ENCODE measurements at regions of chr14 and their contacts with region 1.

Region 1: DNA sequence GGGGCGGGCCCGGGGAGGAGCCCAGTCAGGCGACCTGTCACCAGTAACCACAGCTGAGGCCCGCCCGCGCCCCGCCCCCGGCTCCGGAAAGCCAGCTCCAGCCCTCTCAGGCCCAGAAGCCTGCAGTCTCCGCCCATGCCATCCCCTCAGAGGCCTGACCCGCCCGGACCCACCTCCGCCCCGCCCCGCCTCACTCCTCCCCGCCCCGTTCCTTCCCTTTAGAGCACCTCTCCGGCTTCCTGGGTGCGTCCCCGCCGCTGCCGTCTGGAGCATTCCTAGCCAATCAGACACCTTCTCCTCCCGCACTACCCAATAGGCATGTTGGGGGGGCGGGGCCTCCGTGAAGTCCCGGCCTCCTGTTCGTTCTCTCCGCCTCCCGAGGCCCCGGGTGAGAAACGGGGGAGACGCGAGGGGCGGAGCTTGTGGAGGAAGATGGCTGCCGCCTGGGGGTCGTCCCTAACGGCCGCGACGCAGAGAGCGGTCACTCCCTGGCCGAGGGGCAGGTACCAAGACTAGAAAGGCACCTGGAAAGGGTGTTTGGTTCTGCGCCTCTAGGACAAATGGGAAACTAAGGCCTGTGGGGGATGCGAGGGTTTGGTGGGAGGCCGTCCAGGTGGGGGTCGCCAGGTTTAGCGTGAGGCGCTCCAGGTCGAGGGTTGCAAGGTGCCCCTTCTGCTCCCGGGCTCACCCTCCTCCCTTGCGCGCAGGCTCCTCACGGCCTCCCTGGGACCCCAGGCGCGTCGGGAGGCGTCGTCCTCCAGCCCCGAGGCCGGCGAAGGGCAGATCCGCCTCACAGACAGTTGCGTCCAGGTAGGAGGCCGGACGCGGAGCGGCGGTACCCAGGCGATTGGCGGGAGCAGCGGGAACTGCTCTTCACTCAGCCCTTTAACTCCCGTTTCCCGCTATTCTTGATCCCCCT is at the start of gene ISCA2:
- DNase-seq: peak; percentile 98
- ATAC-seq: peak; percentile 90
- H3K4me3 Mint-ChIP-seq: no peak within 1 kb of the TSS
- H3K27ac Mint-ChIP-seq: no peak within 1 kb of the TSS
- H3K4me1 Mint-ChIP-seq: peaks cover 34% of the 10 kb centered on the region
- H3K27me3 Mint-ChIP-seq: no peaks in the 10 kb centered on the region
- CTCF ChIP-seq: no peak
- total RNA-seq, gene ISCA2: 35.0 and 35.3 TPM in 2 replicates

Region 2: DNA sequence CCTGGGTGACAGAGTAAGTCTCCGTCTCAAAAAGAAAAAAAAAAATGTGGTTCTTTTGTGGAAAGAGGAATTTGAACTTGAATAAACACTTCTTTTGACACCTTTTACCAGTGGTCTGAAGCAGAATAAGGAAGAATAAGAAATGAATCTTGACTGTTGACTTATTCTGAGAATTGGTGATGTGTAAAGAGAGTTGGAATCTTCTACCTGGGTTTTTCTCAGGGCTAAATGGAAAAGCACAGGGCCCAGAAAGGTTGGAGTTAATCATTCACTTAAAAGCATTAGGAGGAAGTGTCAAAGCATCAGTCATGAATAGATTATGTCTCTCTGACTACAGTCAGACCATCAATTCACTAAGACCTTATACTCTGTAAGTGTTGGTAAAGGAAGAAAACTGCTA is 793.3 kb before region 1 on chr14:
- CTCF ChIA-PET with region 1: no interaction called
- POLR2A ChIA-PET with region 1: no interaction called
- intact Hi-C with region 1: no loop called
- DNase-seq: no peak
- ATAC-seq: no peak
- H3K4me3 Mint-ChIP-seq: no peak overlapping the region
- H3K27ac Mint-ChIP-seq: no peak overlapping the region
- H3K4me1 Mint-ChIP-seq: peaks cover 11% of the 10 kb centered on the region
- H3K27me3 Mint-ChIP-seq: no peaks in the 10 kb centered on the region
- CTCF ChIP-seq: no peak

Region 3: GRCh38 chr14:74302634-74303577 is 190.7 kb before region 1 on chr14 and contains the start of gene ABCD4:
- CTCF ChIA-PET with region 1: interaction called, 4 read pairs
- POLR2A ChIA-PET with region 1: interaction called, 5 read pairs
- intact Hi-C with region 1: loop called (anchors 1 kb)
- DNase-seq: peak; percentile 84
- ATAC-seq: peak; percentile 97
- H3K4me3 Mint-ChIP-seq: peak within 1 kb of the TSS; percentile 96
- H3K27ac Mint-ChIP-seq: peak within 1 kb of the TSS; percentile 94
- H3K4me1 Mint-ChIP-seq: peaks cover 26% of the 10 kb centered on the region
- H3K27me3 Mint-ChIP-seq: no peaks in the 10 kb centered on the region
- CTCF ChIP-seq: no peak
- total RNA-seq, gene ABCD4: 58.2 and 78.4 TPM in 2 replicates

Region 4: DNA sequence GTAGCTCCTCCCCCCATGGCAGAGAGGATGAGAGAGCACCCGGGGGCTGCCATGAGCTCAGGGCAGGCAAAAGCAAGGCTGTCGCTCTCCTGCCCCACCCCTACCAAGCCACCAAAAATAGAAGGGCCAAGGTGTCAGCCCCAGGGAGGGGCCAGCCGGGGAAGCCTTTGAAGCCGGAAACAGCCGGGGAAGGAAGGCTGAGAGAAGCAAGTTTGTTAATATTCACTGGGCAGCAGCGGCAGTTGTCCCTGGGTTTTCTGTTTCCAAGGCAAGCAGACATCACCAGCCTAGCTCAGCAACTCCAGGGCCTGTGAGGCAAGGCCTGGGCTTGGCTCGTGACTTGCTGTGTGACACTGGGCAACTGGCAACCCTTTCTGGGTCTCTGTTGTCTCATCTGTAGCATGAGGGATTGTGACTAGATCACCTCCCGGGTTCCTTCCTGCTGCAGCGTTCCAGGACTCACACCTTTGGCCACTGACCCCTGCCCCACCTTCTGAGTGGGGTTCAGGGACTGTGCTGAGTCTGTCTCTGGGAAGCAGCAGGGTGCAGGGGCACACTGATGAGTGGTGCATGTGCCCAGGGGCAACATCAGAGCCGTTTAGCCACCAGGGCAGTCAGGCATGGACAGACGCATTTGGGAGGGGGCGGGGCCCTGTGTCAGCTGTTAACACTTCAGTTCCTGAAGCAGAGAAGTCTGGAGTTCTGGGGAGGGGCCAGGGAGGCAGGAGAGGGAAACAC is 91.9 kb before region 1 on chr14:
- CTCF ChIA-PET with region 1: no interaction called
- POLR2A ChIA-PET with region 1: interaction called, 18 read pairs
- intact Hi-C with region 1: loop called (anchors 1 kb)
- DNase-seq: peak; percentile 74
- ATAC-seq: peak; percentile 90
- H3K4me3 Mint-ChIP-seq: peak overlapping the region; percentile 87
- H3K27ac Mint-ChIP-seq: peak overlapping the region; percentile 98
- H3K4me1 Mint-ChIP-seq: peaks cover 54% of the 10 kb centered on the region
- H3K27me3 Mint-ChIP-seq: no peaks in the 10 kb centered on the region
- CTCF ChIP-seq: no peak

Region 5: DNA sequence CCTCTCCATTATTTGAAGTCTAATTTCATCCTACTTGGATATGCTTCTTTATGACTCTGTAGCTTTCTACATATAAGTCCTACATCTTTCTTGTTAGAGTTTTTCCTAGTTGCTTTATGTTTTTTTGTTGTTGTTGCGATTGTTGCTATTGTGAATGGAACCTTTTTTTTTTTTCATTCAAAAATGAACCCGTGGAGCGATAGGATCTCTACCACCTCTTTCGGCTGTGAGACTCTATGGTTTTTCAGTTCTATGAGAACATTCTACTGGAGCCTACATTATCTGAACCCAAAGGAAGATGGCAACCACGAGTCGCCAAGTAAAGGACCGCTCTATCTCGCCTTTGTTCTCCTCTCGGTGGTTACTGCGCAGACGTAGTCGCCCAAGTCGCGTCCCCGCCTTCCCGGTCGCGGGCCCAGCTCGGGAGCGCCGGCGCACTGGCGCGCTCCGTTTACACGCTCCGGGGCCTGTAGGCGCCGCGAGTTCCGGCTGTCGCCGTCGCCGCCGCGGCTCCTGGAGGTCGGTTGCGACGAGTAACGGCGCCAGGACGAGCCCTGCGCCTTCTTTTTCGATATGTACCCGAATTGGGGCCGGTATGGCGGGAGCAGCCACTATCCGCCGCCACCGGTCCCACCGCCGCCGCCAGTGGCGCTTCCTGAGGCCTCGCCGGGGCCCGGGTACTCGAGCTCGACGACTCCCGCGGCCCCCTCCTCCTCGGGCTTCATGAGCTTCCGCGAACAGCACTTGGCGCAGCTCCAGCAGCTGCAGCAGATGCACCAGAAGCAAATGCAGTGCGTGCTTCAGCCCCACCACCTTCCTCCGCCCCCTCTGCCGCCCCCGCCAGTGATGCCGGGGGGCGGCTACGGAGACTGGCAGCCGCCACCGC is 269.6 kb after region 1 on chr14 and contains the start of gene YLPM1:
- CTCF ChIA-PET with region 1: no interaction called
- POLR2A ChIA-PET with region 1: no interaction called
- intact Hi-C with region 1: loop called (anchors 2 kb)
- DNase-seq: peak; percentile 86
- ATAC-seq: peak; percentile 95
- H3K4me3 Mint-ChIP-seq: peak within 1 kb of the TSS; percentile 90
- H3K27ac Mint-ChIP-seq: peak within 1 kb of the TSS; percentile 90
- H3K4me1 Mint-ChIP-seq: peaks cover 55% of the 10 kb centered on the region
- H3K27me3 Mint-ChIP-seq: no peaks in the 10 kb centered on the region
- CTCF ChIP-seq: no peak
- total RNA-seq, gene YLPM1: 68.5 and 85.9 TPM in 2 replicates

Region 6: GRCh38 chr14:74945823-74946682 is 452.5 kb after region 1 on chr14:
- CTCF ChIA-PET with region 1: no interaction called
- POLR2A ChIA-PET with region 1: no interaction called
- intact Hi-C with region 1: loop called (anchors 10 kb)
- DNase-seq: peak; percentile 61
- ATAC-seq: peak; percentile 67
- H3K4me3 Mint-ChIP-seq: no peak overlapping the region
- H3K27ac Mint-ChIP-seq: peak overlapping the region; percentile 46
- H3K4me1 Mint-ChIP-seq: peaks cover 34% of the 10 kb centered on the region
- H3K27me3 Mint-ChIP-seq: peaks cover 2% of the 10 kb centered on the region
- CTCF ChIP-seq: no peak

Measured in activated B cell treated with CpG ODN at 0.5 μM for 24 hours (primary cell).